Activated naive CD4-positive, alpha-beta T cell treated with anti-CD3 and anti-CD28 coated beads for 36 hours (primary cell): ENCODE measurements at regions of chr5 and their contacts with region 1.

Region 1: GRCh38 chr5:33235824-33236223 is 204.9 kb upstream of the TARS1 start:
- DNase-seq: no peak
- H3K4me3 Mint-ChIP-seq: no peak overlapping the region
- H3K27ac Mint-ChIP-seq: no peak overlapping the region
- H3K4me1 Mint-ChIP-seq: peaks cover 7% of the 10 kb centered on the region
- H3K27me3 Mint-ChIP-seq: no peaks in the 10 kb centered on the region

Region 2: GRCh38 chr5:33205727-33206410 is 30.0 kb before region 1 on chr5:
- CTCF ChIA-PET with region 1: no interaction called
- intact Hi-C with region 1: no loop called
- DNase-seq: no peak
- H3K4me3 Mint-ChIP-seq: no peak overlapping the region
- H3K27ac Mint-ChIP-seq: no peak overlapping the region
- H3K4me1 Mint-ChIP-seq: no peaks in the 10 kb centered on the region
- H3K27me3 Mint-ChIP-seq: no peaks in the 10 kb centered on the region

Region 3: GRCh38 chr5:33299621-33300208 is 63.9 kb after region 1 on chr5:
- CTCF ChIA-PET with region 1: no interaction called
- intact Hi-C with region 1: loop called (anchors 5 kb)
- DNase-seq: peak; percentile 7
- H3K4me3 Mint-ChIP-seq: no peak overlapping the region
- H3K27ac Mint-ChIP-seq: no peak overlapping the region
- H3K4me1 Mint-ChIP-seq: peaks cover 12% of the 10 kb centered on the region
- H3K27me3 Mint-ChIP-seq: peaks cover 11% of the 10 kb centered on the region